Activated CD4-positive, alpha-beta T cell treated with anti-CD3 and anti-CD28 coated beads for 36 hours (primary cell): ENCODE measurements at regions of chr1 and their contacts with region 1.

Region 1: DNA sequence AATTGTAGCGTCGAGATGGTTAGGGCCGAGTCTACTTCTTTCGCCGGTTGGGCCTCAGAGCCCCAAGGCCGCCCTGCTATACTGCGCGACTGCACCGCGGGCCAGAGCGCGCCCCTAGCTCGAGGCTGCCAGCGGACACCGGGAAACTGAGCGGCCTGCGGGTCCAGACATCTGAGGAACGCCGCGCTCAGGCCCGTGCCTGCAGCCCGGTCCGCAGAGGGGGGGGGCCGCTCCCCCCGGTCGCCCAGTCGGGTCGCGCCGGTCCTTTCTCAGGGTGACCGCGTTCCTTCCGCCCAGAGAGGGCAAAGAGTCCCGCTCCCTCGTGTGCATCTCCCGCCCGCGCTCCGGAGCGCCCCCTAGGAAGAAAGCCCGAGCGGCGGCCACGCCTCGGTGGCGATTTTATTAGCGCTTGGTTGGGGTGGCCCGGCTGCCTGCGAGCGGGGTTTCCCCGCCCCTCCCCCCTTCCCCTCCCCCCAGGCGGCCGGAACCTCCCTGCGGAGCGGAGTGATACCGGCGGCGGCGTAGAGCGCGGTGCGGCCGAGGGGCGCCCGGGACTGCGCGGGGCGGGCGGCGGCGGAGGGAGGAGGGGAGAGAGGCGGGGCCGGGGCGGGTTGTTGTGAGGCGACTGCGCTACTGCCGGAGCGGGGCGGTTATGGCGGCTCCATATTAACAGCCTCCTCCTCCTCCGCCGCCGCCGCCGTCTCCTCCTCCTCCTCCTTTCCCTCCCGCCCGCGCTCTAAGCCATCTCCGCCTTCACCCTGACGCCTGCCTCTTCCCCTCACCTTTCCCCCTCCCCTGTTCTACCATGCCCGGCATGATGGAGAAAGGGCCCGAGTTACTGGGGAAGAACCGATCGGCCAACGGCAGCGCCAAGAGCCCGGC is at the start of gene RCOR3:
- DNase-seq: peak; percentile 97
- ATAC-seq: peak; percentile 83
- H3K4me3 Mint-ChIP-seq: peak within 1 kb of the TSS; percentile 90
- H3K27ac Mint-ChIP-seq: peak within 1 kb of the TSS; percentile 96
- H3K4me1 Mint-ChIP-seq: peaks cover 13% of the 10 kb centered on the region
- H3K27me3 Mint-ChIP-seq: no peaks in the 10 kb centered on the region
- total RNA-seq, gene RCOR3: 31.0 to 33.4 TPM

Region 2: GRCh38 chr1:209784265-209785169 is 1474.5 kb before region 1 on chr1 and contains the start of gene C1orf74:
- CTCF ChIA-PET with region 1: no interaction called
- POLR2A ChIA-PET with region 1: no interaction called
- intact Hi-C with region 1: loop called in 1 of 2 experiments (anchors 10 kb)
- DNase-seq: peak; percentile 100
- ATAC-seq: peak; percentile 99
- H3K4me3 Mint-ChIP-seq: peak within 1 kb of the TSS; percentile 89
- H3K27ac Mint-ChIP-seq: peak within 1 kb of the TSS; percentile 97
- H3K4me1 Mint-ChIP-seq: peaks cover 30% of the 10 kb centered on the region
- H3K27me3 Mint-ChIP-seq: no peaks in the 10 kb centered on the region
- total RNA-seq, gene C1orf74: 3.7 to 4.3 TPM

Region 3: GRCh38 chr1:211229365-211229759 is 29.6 kb before region 1 on chr1:
- CTCF ChIA-PET with region 1: interaction called, 3 read pairs
- POLR2A ChIA-PET with region 1: no interaction called
- intact Hi-C with region 1: loop called in 1 of 2 experiments (anchors 1 kb)
- DNase-seq: no peak
- ATAC-seq: peak; percentile 65
- H3K4me3 Mint-ChIP-seq: peak overlapping the region; percentile 25
- H3K27ac Mint-ChIP-seq: peak overlapping the region; percentile 61
- H3K4me1 Mint-ChIP-seq: peaks cover 25% of the 10 kb centered on the region
- H3K27me3 Mint-ChIP-seq: no peaks in the 10 kb centered on the region

Region 4: DNA sequence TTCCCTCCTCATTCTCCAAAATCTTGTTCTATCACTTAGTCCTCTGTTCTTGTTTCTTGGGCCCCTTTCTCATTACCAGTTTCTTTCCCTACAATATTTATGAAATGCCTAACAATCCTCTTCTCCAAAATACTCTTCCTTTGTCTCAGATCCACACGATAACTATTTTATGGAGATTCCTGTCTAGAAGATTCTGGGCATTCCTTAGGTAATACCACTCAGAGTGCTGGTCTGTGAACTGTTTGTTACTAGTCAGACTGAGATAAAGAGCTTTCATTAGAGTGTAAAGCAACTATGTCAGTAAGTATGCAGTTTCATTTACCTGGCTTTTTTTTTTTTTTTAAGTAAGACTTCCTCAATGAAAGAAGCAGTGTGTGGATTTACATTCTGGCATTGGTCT is 17.9 kb before region 1 on chr1:
- CTCF ChIA-PET with region 1: no interaction called
- POLR2A ChIA-PET with region 1: no interaction called
- intact Hi-C with region 1: no loop called
- DNase-seq: no peak
- ATAC-seq: no peak
- H3K4me3 Mint-ChIP-seq: no peak overlapping the region
- H3K27ac Mint-ChIP-seq: no peak overlapping the region
- H3K4me1 Mint-ChIP-seq: no peaks in the 10 kb centered on the region
- H3K27me3 Mint-ChIP-seq: peaks cover 3% of the 10 kb centered on the region

Region 5: GRCh38 chr1:211305044-211305443 is 46.0 kb after region 1 on chr1:
- CTCF ChIA-PET with region 1: interaction called, 3 read pairs
- POLR2A ChIA-PET with region 1: no interaction called
- intact Hi-C with region 1: loop called (anchors 2 to 5 kb)
- DNase-seq: peak; percentile 76
- ATAC-seq: peak; percentile 100
- H3K4me3 Mint-ChIP-seq: no peak overlapping the region
- H3K27ac Mint-ChIP-seq: peak overlapping the region; percentile 74
- H3K4me1 Mint-ChIP-seq: peaks cover 38% of the 10 kb centered on the region
- H3K27me3 Mint-ChIP-seq: no peaks in the 10 kb centered on the region

Region 6: DNA sequence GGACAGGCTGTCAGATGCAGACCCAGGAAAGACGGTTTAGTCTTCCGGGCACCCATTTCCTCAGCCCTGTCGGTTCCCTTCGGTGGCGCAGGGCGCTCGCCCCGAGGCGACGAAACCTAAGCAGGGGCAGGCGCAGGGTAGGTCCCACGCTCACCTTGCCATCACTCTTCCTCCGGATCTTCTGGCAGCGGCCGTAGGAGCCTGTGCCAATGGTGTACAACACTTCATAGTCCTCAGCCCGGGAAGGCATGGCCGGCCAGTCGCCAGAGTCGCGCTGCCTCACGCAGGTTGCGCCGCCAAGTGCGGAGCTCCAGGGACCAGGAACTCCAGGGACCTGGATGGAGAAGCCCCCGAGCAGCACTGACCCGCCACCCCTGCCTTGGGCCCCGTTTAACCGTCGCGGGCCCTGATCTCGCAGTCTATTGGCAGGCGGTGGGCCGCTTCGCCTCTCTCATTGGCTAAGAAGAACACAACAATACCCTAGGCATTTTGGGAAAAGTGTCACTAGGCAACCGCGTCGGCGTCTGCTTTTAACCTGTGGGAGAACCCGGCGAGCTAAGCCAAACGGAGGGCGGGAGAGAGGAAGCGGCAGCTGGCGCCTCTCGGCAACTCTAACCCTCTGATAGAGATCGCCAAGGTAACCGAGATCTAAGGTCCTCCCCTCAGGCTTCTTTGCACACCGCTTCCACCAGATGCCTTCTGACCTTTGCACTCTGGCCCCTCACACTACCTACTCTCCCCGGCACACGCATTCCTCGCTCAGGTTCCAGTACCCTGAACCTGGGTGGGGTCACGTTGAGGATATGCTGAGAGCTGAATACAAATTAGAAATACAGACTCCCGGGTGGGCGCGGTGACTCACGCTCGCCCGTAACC is 416.5 kb after region 1 on chr1 and contains the start of gene NEK2:
- CTCF ChIA-PET with region 1: no interaction called
- POLR2A ChIA-PET with region 1: no interaction called
- intact Hi-C with region 1: loop called in 1 of 2 experiments (anchors 1 kb)
- DNase-seq: peak; percentile 94
- ATAC-seq: peak; percentile 98
- H3K4me3 Mint-ChIP-seq: peak within 1 kb of the TSS; percentile 94
- H3K27ac Mint-ChIP-seq: peak within 1 kb of the TSS; percentile 84
- H3K4me1 Mint-ChIP-seq: peaks cover 6% of the 10 kb centered on the region
- H3K27me3 Mint-ChIP-seq: no peaks in the 10 kb centered on the region
- total RNA-seq, gene NEK2: 32.3 to 38.8 TPM